ENCODE measurements at regions of chr14 and their contacts with region 1.

Region 1: DNA sequence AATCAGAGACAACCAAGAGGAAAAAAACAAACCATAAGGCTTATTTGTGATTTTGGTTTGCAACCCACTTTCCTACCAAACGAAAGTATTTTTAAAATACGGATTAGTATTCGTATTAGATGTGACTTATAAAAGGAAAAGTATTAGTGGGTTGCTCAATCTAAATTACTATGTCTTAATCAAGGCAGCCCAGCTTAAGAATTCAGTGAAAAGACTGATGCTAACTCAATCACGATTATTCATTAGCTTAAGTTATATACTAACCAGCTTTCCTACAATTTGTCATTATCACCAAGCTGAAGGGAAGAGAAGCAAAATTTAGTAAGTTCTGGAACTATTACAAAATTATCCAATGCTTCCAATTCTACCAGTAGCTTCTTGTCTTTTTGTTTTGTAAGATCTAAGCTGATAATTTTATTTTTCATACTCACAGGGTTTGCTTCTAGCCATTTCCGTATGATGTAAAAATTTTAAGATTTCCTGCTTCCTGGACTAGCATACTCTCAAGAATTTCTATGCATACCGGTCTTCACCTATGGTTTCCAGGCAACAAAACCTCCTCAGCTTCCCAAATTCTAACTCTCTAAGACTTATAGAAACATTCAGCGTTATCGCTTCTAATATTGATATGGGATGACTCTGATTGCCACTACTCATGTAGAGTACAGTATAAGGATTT is 62.6 kb downstream of the FERMT2 start:
- DNase-seq: no peak
- ATAC-seq: no peak
- H3K4me3 ChIP-seq: no peak overlapping the region
- H3K27ac ChIP-seq: no peak overlapping the region
- H3K4me1 ChIP-seq: no peaks in the 10 kb centered on the region
- H3K27me3 ChIP-seq: no peaks in the 10 kb centered on the region
- CTCF ChIP-seq: no peak

Region 2: GRCh38 chr14:52949249-52949648 is 61.0 kb after region 1 on chr14:
- CTCF ChIA-PET with region 1: interaction called, 13 read pairs
- POLR2A ChIA-PET with region 1: no interaction called
- in situ Hi-C with region 1: no loop called
- intact Hi-C with region 1: no loop called
- DNase-seq: no peak
- ATAC-seq: no peak
- H3K4me3 ChIP-seq: peak overlapping the region; percentile 74 to 93
- H3K27ac ChIP-seq: peak overlapping the region; percentile 71; the same call in 1 of the 2 replicates
- H3K4me1 ChIP-seq: peaks cover 8% of the 10 kb centered on the region
- H3K27me3 ChIP-seq: no peaks in the 10 kb centered on the region
- CTCF ChIP-seq: no peak

Measured in Panc1 (cell line).